ENCODE measurements at regions of chr19 and their contacts with region 1.

Region 1: DNA sequence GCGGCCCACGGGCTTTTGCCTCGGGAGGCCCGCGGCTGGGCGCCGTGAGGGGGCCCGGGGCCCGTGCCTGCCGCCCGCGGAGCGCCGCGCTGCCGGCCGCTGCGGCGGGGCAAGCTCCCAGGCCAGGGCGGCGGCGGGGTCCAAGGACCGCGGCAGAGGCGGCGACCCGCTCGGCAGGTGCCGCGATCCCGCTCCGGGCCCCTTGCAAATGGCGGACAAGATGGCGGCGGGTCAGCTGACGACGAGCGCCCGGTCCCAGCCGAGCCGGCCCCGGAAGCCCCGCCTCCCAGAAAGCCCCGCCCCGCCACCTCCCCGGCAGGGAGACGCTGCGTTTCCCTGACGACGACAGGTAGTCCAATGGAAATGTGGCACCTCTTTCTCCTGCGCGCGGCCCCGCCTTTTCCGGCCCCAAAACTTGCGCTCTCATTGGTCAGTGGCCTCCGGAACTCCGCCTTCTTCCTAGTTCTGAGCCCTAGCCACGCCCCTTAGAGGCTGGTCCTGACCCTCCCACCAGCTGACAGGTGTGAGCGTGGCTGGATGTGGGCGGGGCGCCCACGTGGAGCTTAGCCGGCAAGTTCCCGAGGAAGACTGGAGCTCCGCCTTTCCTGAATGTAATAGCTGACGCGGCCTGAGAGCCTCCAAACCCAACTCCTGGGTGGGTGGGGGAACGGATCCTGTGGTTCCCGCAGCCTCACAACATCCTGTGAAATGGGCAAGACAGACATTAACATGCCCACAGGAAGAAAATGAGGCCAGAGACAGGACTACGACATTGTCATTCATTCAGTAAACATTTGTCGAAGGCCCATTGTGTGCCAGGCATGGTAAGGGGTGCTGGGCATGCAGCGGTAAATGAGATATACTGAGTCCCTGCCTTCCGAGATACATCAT is at the start of gene AP3D1:
- DNase-seq: peak; percentile 100
- total RNA-seq, gene AP3D1: 89.0 TPM

Region 2: DNA sequence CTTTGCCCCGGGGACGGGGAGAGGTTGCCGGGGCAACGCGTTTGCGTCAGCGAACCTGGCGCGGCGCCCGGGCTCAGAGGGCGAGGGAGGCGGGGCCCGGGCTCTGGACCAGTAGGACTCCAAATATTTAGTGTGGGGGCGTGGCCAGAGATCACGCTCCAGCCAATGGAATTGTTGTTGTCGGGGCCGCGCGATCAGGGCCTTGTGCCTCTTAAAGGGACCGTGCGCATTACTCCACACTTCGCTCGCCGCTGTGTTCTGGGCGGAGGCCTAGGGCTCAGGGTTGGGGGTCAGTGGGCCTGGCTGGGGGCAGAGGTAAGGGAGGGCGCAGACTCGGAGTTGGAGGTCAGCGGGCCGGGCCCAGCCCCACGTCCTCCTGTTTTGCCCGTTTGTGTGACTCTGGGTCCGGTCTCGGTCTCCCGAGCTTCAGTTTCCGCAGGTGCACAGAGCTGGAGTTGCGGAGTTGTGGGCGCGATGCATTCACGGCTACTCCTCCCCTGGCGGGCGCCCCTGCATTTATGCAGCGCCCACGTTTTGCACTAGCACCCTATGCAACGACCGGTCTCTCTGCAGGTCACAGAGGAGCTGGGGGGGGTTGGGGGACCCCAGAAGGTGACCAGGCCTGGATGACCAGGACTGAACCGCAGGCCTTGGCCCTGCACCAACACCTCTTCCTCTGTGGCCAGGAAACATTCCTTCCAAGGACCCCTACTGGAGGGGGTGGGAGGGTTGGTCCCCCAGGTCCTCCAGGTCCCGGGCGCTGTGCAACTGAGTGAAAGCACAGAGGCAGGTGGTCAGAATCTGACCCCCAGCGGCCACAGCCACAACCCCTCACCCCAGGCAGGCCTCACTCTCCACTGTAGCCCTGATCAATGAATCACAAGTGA is 89.8 kb before region 1 on chr19:
- intact Hi-C with region 1: no loop called
- DNase-seq: peak; percentile 99

Region 3: DNA sequence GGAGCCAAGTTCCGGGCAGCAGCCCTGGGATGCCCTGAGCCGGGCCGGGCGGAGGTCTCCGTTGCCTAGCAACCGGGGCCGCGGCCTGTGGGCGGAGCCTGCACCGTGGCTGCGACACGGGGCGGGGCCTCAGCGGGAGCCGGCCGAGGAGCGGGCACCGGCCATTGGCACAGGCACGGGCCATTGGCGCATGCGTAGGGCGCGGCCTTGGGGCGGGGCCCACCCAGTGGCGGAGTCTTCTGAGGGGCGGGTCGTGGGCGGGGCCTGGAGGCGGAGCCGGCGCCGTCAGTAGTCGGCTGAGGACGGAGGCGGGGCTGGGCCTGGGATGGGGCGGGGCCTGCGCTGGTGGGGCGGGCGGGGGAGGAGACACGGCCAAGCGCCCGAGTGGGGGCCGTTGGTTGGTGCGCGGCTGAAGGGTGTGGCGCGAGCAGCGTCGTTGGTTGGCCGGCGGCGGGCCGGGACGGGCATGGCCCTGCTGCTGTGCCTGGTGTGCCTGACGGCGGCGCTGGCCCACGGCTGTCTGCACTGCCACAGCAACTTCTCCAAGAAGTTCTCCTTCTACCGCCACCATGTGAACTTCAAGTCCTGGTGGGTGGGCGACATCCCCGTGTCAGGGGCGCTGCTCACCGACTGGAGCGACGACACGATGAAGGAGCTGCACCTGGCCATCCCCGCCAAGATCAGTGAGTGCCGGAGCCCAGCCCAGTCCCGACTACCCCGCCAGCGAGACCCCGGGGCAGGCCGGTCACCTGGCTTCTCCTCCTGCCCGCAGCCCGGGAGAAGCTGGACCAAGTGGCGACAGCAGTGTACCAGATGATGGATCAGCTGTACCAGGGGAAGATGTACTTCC is 54.9 kb before region 1 on chr19 and contains the start of gene IZUMO4:
- intact Hi-C with region 1: loop called (anchors 2 kb)
- DNase-seq: peak; percentile 100
- total RNA-seq, gene IZUMO4: 4.3 TPM

Region 4: DNA sequence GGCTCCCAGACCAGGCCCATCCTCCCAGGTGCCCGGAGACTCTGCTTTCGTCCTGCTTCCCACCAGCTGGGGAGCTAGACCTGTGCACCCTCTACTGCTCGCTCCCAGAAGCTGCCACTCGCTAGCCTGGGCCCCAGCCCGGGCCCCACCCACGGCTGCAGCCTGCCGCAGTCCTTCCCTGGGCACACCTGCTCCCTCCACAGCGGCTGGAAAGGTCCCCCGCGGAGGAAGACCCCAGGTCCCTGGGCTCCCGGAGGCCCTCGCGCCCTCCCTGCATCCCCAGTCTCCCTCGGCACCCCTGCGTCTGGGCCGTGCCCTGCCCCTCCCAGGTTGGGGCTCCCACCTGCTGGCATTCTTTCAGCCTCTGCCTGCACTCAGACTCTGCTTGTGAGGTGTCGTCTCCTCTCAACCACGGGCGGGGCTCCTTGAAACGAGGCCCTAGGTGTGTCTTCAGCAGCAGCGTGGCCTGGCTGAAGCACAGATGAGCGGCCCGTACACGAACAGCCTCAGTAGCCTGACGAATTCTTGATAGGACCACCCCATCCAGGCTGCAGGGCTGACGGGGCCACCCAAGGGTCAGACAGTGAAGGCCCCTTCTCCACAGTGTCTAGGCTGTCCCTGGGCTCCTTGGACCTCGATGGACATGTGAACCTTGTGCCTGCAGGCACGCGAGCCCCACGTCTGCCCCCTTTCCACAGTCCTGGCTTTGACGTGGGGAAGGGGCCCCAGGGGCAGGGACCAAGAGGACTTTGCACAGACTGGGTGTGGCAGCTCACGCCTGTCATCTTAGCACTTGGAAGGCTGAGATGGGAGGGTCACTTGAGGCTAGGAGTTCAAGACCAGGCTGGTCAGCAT is 40.1 kb after region 1 on chr19:
- intact Hi-C with region 1: loop called (anchors 5 kb)
- DNase-seq: no peak

Region 5: DNA sequence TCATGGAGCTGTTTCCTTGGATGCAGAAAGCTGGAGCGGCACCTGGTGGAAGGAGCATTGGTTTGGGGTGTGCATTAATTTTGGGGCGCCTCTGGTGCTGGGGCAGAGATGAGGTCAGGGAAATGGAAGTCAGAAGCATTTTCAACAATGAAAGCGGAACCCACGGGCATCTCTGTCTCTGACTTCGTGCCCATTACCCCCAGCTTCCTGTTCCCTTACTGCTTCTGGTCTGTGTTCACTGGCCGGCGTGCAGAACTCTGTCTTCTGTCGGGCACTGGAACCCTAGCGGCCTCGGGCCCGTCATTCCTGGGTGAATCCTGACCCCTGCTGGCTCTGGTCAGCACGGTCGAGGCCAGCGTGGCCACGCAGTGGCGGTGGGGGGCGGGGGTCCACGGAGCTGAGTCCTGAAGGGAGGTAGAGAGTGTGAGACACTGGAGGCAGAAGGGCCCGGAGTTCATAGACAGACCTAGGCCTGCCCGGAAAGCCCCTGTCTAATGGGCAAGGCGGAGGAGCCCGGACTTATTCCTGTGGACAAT is 164.3 kb after region 1 on chr19:
- intact Hi-C with region 1: loop called (anchors 5 kb)
- DNase-seq: peak; percentile 93

Region 6: DNA sequence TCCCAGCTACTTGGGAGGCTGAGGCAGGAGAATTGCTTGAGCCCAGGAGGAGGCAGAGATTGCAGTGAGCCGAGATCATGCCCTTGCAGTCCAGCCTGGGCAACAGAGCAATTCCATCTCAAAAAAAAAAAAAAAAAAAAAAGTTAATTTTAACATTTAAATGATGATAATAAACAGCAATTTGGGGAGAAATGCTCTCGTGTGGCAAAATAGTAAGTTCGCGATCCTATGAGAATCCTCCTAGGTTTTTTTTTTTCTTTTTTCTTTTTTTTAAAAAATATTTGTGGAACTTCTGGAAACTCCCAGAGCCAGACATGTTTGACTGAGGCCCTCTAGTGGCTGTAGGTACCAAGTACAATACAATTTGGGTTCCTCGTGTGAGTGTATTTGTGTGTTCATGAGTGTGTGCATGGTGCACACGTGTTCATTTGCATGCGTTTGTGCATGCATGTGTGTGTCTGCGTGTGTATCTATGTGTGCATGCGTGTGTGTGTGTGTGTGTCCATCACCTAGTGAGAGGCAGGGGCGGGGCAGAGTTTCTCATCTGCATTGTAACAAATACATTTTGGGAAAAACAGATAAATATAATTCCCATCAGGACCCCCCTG is 239.6 kb after region 1 on chr19:
- intact Hi-C with region 1: loop called (anchors 5 kb)
- DNase-seq: no peak

Measured in cardiac septum (tissue), 1 donor.